ENCODE measurements at regions of chr5 and their contacts with region 1.

Region 1: GRCh38 chr5:140401362-140402257 is at the start of gene ANKHD1:
- DNase-seq: peak; percentile 95 to 99 (median 99)
- H3K4me3 ChIP-seq: peak within 1 kb of the TSS; percentile 69 to 100 (median 98)
- H3K27ac ChIP-seq: peak within 1 kb of the TSS; percentile 82 to 100 (median 97)
- H3K27me3 ChIP-seq: no peaks in the 10 kb centered on the region
- CTCF ChIP-seq: peak in 38 of 56 donors; percentile 6 to 59 (median 30)
- total RNA-seq, gene ANKHD1: 85.6 to 158 (median 124) TPM

Region 2: DNA sequence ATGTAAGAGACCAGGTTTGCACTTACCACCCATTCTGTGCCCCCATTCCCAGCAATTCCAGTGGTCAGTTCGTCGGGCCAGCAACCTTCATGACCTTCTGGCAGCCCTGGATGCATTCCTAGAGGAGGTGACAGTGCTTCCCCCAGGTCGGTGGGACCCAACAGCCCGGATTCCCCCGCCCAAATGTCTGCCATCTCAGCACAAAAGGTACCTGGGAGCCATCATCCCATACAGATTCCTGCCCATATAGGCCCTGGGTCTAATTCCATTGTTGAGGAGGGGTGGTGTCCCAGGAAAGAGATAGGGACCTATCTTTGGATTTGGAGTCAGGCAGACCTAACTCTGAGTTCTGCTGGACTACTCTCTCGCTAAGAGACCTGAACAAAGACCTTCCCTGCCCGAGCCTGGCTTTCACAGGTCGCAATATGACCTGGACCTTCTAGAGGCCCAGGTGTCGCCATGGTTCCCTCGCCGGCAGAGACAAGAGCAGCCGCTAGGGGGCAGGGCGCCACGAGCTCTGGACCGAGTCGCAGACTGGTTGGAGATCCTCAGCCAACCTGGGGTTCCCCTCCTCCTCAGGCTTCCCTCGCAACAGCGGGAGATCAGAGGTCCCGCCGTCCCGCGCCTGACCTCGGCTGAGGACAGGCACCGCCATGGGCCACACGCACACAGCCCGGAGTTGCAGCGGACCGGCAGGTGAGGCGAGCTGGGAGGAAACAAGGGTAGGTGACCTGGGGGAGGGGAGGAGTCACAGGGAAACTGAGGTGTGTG is 38.6 kb before region 1 on chr5:
- intact Hi-C with region 1: loop called in 1 of 2 experiments (anchors 5 kb)
- DNase-seq: peak; percentile 68 to 83 (median 74)
- H3K4me3 ChIP-seq: peak overlapping the region in 55 of 59 donors; percentile 18 to 65 (median 47)
- H3K27ac ChIP-seq: no peak overlapping the region
- H3K27me3 ChIP-seq: no peaks in the 10 kb centered on the region
- CTCF ChIP-seq: peak; percentile 61 to 96 (median 89)

Region 3: GRCh38 chr5:140547508-140548299 is 146.1 kb after region 1 on chr5 and contains the start of gene EIF4EBP3:
- intact Hi-C with region 1: loop called in 1 of 2 experiments (anchors 5 kb)
- DNase-seq: peak; percentile 93 to 98 (median 97)
- H3K4me3 ChIP-seq: peak within 1 kb of the TSS; percentile 27 to 93 (median 59)
- H3K27ac ChIP-seq: peak within 1 kb of the TSS; percentile 53 to 97 (median 89)
- H3K27me3 ChIP-seq: no peaks in the 10 kb centered on the region
- CTCF ChIP-seq: peak in 52 of 56 donors; percentile 22 to 71 (median 52)
- total RNA-seq, gene EIF4EBP3: 1.2 to 16.5 (median 5.9) TPM

Region 4: GRCh38 chr5:140564196-140565023 is 162.8 kb after region 1 on chr5 and contains the starts of genes APBB3 and SLC35A4:
- intact Hi-C with region 1: loop called (anchors 2 to 5 kb)
- DNase-seq: peak; percentile 93 to 99 (median 98)
- H3K4me3 ChIP-seq: peak within 1 kb of the TSS; percentile 61 to 98 (median 88)
- H3K27ac ChIP-seq: peak within 1 kb of the TSS; percentile 78 to 98 (median 95)
- H3K27me3 ChIP-seq: no peaks in the 10 kb centered on the region
- CTCF ChIP-seq: peak in 29 of 56 donors; percentile 3 to 62 (median 24)
- total RNA-seq, gene APBB3: 34.6 to 98.7 (median 58.4) TPM
- total RNA-seq, gene SLC35A4: 23.5 to 50.7 (median 34.7) TPM

Region 5: DNA sequence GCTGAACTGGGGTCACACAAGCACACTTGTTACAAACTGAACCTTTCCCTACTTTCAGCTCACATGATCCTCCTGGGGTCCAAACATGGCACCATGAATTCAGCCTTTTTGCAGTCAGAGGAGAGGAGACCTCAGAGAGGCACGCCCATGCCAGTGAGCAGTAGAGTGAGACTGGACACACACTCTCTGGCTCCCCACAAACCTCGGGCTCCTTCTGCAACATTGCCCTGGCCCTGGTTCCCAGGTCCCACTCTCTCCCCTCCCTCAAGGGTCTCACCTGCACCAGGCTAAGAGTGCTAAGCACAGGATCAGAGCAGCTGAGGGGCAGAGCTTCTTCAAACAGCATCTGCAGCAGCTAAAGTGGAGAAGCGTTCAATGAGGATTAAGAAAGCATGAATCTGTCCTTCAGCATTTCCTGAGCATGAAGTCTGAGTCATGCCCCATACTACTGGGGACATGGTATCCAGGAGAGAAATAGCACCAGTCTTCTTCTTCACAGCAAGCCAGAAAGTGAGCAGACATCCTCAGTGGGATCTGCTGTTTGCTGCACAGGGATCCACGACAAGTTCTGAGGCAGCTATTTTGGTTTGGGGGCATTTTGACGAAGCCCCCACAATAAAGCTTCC is 190.2 kb after region 1 on chr5:
- intact Hi-C with region 1: no loop called
- DNase-seq: no peak
- H3K4me3 ChIP-seq: peak overlapping the region in 2 of 59 donors; percentile 18 to 24
- H3K27ac ChIP-seq: peak overlapping the region in 2 of 59 donors; percentile 22 to 31
- H3K27me3 ChIP-seq: no peaks in the 10 kb centered on the region
- CTCF ChIP-seq: no peak

Region 6: GRCh38 chr5:140647042-140647341 is 245.4 kb after region 1 on chr5:
- intact Hi-C with region 1: loop called (anchors 2 to 5 kb)
- DNase-seq: no peak
- H3K4me3 ChIP-seq: peak overlapping the region; percentile 76 to 100 (median 93)
- H3K27ac ChIP-seq: peak overlapping the region in 56 of 59 donors; percentile 0 to 91 (median 77)
- H3K27me3 ChIP-seq: no peaks in the 10 kb centered on the region
- CTCF ChIP-seq: no peak

Region 7: DNA sequence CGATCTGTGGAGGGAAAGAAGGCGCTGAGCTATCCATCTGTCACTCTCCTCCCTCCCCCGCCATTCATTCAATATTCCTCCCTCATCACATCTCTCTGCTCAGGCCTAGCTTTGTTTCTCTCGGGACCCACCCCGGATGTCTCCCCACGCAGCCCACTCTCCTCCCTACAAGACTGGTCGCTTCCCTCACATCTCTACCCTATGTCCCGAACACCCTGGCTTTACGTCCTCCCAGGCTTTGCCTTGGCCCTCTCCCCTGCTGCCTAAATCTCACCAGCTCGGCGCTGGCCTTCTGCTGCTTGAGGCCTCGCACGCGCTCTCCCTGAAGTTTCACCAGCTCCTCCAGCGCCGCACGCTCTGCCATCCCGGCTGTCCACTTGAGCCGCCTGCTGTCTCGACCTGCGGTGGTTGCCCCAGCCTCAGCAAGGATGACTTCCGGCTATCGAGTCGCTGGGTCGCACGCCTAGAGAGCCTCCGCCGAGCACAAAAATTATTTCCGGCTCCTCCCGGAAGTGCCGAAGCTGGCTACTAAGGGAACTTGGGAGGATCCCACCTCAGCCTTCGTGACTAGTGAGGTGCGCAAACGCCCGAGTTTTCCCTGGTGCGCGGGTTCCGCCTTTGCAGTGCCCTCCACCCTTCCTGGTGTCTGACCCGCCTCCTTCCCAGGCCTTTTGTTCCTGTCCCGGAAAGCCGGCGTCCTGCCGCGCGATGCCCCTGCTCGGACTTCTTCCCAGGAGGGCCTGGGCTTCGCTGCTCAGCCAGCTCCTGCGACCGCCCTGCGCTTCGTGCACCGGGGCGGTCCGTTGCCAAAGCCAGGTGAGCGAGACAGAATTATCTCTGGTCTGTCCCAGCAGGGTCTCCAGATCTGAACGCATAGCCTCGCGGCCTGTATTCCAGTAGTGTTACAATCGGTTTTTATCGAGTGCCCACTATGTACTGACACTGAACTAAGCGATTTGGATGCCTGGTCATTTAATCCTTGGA is 289.6 kb after region 1 on chr5 and contains the starts of genes HARS1 and HARS2:
- intact Hi-C with region 1: loop called in 1 of 2 experiments (anchors 10 kb)
- DNase-seq: peak; percentile 84 to 96 (median 94)
- H3K4me3 ChIP-seq: peak within 1 kb of the TSS; percentile 69 to 100 (median 91)
- H3K27ac ChIP-seq: peak within 1 kb of the TSS in 58 of 59 donors; percentile 29 to 93 (median 82)
- H3K27me3 ChIP-seq: no peaks in the 10 kb centered on the region
- CTCF ChIP-seq: peak in 36 of 56 donors; percentile 4 to 53 (median 30)
- total RNA-seq, gene HARS1: 57.9 to 134 (median 105) TPM
- total RNA-seq, gene HARS2: 22.6 to 42.7 (median 32.0) TPM